Caco-2 (cell line): ENCODE measurements at regions of chrX and their contacts with region 1.

Region 1: GRCh38 chrX:108299101-108299591 is 139.1 kb downstream of the COL4A6 start:
- DNase-seq: peak; percentile 4 to 37
- H3K4me3 ChIP-seq: no peak overlapping the region
- H3K4me3 Mint-ChIP-seq: peak overlapping the region; percentile 51
- H3K27ac Mint-ChIP-seq: peak overlapping the region; percentile 87
- H3K4me1 ChIP-seq: no peaks in the 10 kb centered on the region; the same call in 1 of the 2 replicates
- H3K4me1 Mint-ChIP-seq: peaks cover 19% of the 10 kb centered on the region
- H3K27me3 ChIP-seq: no peaks in the 10 kb centered on the region
- H3K27me3 Mint-ChIP-seq: no peaks in the 10 kb centered on the region
- CTCF ChIP-seq: no peak

Region 2: GRCh38 chrX:108362026-108362425 is 62.9 kb after region 1 on chrX:
- CTCF ChIA-PET with region 1: no interaction called
- POLR2A ChIA-PET with region 1: no interaction called
- intact Hi-C with region 1: no loop called
- DNase-seq: no peak
- H3K4me3 ChIP-seq: no peak overlapping the region
- H3K4me3 Mint-ChIP-seq: no peak overlapping the region
- H3K27ac Mint-ChIP-seq: no peak overlapping the region
- H3K4me1 ChIP-seq: peaks cover 16% of the 10 kb centered on the region
- H3K4me1 Mint-ChIP-seq: peaks cover 22% of the 10 kb centered on the region
- H3K27me3 ChIP-seq: no peaks in the 10 kb centered on the region
- H3K27me3 Mint-ChIP-seq: no peaks in the 10 kb centered on the region
- CTCF ChIP-seq: no peak

Region 3: DNA sequence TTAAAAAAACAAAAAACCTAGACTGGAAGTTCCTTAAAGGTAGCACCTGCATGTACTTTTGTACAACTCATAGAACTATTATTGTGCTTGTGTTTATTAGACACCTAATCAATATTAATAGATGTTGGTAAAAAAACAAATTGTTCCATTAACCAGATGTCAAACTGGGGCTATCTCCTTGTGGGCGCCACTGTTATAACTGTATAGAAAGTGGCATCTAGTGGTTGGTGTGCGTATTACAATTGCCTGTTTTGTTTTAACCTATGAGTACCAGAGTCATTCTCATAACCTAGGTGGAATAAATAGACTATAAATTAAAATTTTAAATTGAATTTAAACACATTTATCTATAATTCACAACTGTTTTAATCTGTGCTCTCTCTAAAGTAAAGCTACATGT is 237.9 kb after region 1 on chrX:
- CTCF ChIA-PET with region 1: no interaction called
- POLR2A ChIA-PET with region 1: no interaction called
- intact Hi-C with region 1: loop called (anchors 2 kb)
- DNase-seq: peak in 1 of 2 experiments; percentile 36
- H3K4me3 ChIP-seq: no peak overlapping the region
- H3K4me3 Mint-ChIP-seq: no peak overlapping the region
- H3K27ac Mint-ChIP-seq: no peak overlapping the region
- H3K4me1 ChIP-seq: no peaks in the 10 kb centered on the region
- H3K4me1 Mint-ChIP-seq: peaks cover 10% of the 10 kb centered on the region
- H3K27me3 ChIP-seq: no peaks in the 10 kb centered on the region
- H3K27me3 Mint-ChIP-seq: no peaks in the 10 kb centered on the region
- CTCF ChIP-seq: peak; percentile 53 to 63